Activated CD4-positive, alpha-beta memory T cell treated with anti-CD3 and anti-CD28 coated beads for 36 hours (primary cell): ENCODE measurements at regions of chr11 and their contacts with region 1.

Region 1: DNA sequence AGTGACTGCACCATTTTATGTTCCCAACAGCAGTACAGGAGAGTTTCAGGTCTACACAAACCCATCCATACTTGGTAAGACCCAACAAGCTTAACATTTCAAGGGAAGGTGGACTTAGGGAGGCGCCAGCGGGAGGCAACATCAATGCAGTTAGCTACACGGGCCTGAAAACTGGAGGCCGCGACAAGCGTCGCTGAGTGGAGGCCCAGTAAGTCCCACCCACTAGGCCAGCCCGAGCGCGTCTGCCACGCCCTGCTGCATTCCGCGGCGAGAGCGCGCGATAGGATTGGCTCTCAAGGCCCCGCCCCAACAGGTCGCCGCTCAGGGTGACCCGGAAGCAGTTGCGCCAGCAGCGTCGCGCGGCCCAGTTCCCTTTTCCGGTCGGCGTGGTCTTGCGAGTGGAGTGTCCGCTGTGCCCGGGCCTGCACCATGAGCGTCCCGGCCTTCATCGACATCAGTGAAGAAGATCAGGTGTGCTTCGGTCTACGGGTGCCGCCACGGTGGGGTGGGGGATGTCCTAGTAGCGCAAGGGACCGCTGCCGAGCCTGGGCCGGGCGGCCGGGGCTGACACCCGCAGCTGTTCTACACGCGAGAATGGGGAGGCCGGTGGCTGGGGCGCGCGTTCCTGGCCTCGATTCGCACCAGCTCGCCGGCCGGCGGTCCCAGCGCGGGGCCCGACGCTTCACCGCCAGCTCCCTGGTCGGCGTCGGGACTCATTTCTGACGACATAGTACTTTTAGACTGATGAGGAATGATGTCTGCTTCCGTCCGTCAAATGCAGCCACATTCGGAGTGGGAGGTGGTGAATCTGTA is at the start of gene EIF3M:
- DNase-seq: peak; percentile 97
- H3K4me3 Mint-ChIP-seq: peak within 1 kb of the TSS; percentile 97
- H3K27ac Mint-ChIP-seq: peak within 1 kb of the TSS; percentile 98
- H3K4me1 Mint-ChIP-seq: peaks cover 38% of the 10 kb centered on the region
- H3K27me3 Mint-ChIP-seq: peaks cover 1% of the 10 kb centered on the region
- total RNA-seq, gene EIF3M: 377 to 389 TPM

Region 2: DNA sequence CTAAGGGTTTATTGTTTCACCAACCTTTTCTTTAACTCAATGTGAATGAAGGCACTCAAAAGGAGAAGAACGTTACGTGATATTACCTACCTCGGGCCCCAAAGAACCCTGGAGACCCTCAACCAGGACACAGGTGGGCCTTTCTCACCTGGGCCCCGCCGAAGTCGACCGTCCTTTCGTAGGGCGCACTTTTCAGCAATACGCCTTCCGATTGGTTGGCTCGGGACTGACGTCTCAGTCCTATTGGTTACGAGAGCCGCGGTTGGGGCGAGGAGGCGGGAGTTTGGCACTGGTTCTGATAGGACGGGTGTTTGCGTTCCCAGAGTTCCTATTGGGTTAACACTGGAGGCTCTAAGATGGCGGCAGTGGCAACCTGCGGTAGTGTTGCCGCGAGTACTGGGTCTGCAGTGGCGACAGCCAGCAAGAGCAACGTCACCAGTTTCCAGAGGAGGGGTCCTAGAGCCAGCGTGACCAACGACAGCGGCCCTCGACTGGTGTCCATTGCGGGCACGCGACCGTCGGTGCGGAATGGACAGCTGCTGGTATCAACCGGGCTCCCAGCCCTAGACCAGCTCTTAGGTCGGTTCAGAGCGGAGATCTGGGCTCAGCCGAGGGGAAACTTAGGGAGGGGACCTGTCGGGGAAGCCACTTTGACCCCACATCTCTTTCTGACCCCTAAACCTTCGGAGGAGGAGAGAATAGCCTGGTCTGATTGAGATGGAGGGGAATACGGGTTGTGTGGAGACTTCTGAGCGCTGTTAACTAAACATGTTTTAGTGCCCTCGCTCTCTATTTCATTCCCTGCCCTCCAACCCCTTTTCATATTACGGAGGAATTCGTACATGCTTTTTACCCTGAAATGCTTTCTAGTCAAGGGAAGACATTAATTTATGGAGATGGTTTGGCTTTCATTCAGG is 1074.0 kb before region 1 on chr11 and contains the starts of genes ELP4 and IMMP1L:
- CTCF ChIA-PET with region 1: no interaction called
- POLR2A ChIA-PET with region 1: no interaction called
- intact Hi-C with region 1: loop called (anchors 10 kb)
- DNase-seq: peak; percentile 97
- H3K4me3 Mint-ChIP-seq: peak within 1 kb of the TSS; percentile 97
- H3K27ac Mint-ChIP-seq: peak within 1 kb of the TSS; percentile 88
- H3K4me1 Mint-ChIP-seq: peaks cover 30% of the 10 kb centered on the region
- H3K27me3 Mint-ChIP-seq: no peaks in the 10 kb centered on the region
- total RNA-seq, gene ELP4: 18.3 to 18.5 TPM
- total RNA-seq, gene IMMP1L: 20.4 to 21.8 TPM

Region 3: DNA sequence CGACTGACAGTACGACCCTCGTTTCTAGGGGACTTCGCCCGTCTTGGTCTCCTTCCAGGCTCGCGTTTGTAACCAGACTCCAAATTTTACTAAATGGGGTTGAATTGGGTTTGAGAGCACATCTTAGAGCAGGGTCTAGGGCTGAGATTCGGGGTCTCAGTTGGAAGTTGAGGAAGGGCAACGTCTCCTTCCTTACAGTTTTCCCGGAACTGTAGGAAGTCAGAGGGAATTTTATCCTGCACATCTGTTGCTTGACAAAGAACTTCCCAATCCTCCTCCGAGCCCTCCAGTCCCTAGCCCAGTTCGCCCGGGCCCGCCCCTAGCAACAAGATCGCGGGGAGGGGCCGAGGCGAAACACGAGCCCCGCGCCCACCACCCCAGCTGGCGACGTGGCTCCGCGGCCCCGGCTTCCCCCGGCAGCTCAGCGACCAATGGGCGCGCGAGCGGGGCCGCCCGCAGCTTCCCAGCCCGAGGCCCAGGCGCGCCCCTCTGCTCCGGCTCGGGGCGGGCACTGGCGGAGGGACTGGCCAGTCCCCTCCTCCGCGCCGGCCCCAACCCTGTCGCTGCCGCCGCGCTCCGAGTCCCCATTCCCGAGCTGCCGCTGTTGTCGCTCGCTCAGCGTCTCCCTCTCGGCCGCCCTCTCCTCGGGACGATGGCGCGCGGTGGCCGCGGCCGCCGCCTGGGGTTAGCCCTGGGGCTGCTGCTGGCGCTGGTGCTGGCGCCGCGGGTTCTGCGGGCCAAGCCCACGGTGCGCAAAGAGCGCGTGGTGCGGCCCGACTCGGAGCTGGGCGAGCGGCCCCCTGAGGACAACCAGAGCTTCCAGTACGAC is 492.9 kb before region 1 on chr11 and contains the start of gene RCN1:
- CTCF ChIA-PET with region 1: no interaction called
- POLR2A ChIA-PET with region 1: no interaction called
- intact Hi-C with region 1: loop called (anchors 10 kb)
- DNase-seq: peak; percentile 50
- H3K4me3 Mint-ChIP-seq: peak within 1 kb of the TSS; percentile 80
- H3K27ac Mint-ChIP-seq: peak within 1 kb of the TSS; percentile 85
- H3K4me1 Mint-ChIP-seq: peaks cover 39% of the 10 kb centered on the region
- H3K27me3 Mint-ChIP-seq: peaks cover 14% of the 10 kb centered on the region
- total RNA-seq, gene RCN1: 25.4 to 27.0 TPM

Region 4: GRCh38 chr11:32594272-32594671 is 10.6 kb after region 1 on chr11:
- CTCF ChIA-PET with region 1: no interaction called
- POLR2A ChIA-PET with region 1: interaction called, 3 read pairs
- intact Hi-C with region 1: loop called (anchors 1 kb)
- DNase-seq: no peak
- H3K4me3 Mint-ChIP-seq: no peak overlapping the region
- H3K27ac Mint-ChIP-seq: no peak overlapping the region
- H3K4me1 Mint-ChIP-seq: peaks cover 44% of the 10 kb centered on the region
- H3K27me3 Mint-ChIP-seq: no peaks in the 10 kb centered on the region

Region 5: GRCh38 chr11:32792948-32793475 is 209.3 kb after region 1 on chr11:
- CTCF ChIA-PET with region 1: no interaction called
- POLR2A ChIA-PET with region 1: no interaction called
- intact Hi-C with region 1: loop called (anchors 10 kb)
- DNase-seq: peak; percentile 75
- H3K4me3 Mint-ChIP-seq: no peak overlapping the region
- H3K27ac Mint-ChIP-seq: no peak overlapping the region
- H3K4me1 Mint-ChIP-seq: peaks cover 7% of the 10 kb centered on the region
- H3K27me3 Mint-ChIP-seq: peaks cover 2% of the 10 kb centered on the region

Region 6: GRCh38 chr11:32893343-32894148 is 309.9 kb after region 1 on chr11:
- CTCF ChIA-PET with region 1: no interaction called
- POLR2A ChIA-PET with region 1: interaction called, 5 read pairs
- intact Hi-C with region 1: loop called (anchors 5 kb)
- DNase-seq: peak; percentile 68
- H3K4me3 Mint-ChIP-seq: peak overlapping the region; percentile 97
- H3K27ac Mint-ChIP-seq: peak overlapping the region; percentile 90
- H3K4me1 Mint-ChIP-seq: peaks cover 32% of the 10 kb centered on the region
- H3K27me3 Mint-ChIP-seq: no peaks in the 10 kb centered on the region

Region 7: GRCh38 chr11:33161120-33162005 is 577.7 kb after region 1 on chr11 and contains the start of gene CSTF3:
- CTCF ChIA-PET with region 1: no interaction called
- POLR2A ChIA-PET with region 1: interaction called, 5 read pairs
- intact Hi-C with region 1: loop called (anchors 2 kb)
- DNase-seq: peak; percentile 99
- H3K4me3 Mint-ChIP-seq: peak within 1 kb of the TSS; percentile 99
- H3K27ac Mint-ChIP-seq: peak within 1 kb of the TSS; percentile 95
- H3K4me1 Mint-ChIP-seq: peaks cover 40% of the 10 kb centered on the region
- H3K27me3 Mint-ChIP-seq: no peaks in the 10 kb centered on the region
- total RNA-seq, gene CSTF3: 31.7 to 33.7 TPM